Cardiac septum (tissue), 1 donor: ENCODE measurements at regions of chr9 and their contacts with region 1.

Region 1: GRCh38 chr9:17531642-17532254 is 47.1 kb upstream of the SH3GL2 start:
- DNase-seq: no peak

Region 2: DNA sequence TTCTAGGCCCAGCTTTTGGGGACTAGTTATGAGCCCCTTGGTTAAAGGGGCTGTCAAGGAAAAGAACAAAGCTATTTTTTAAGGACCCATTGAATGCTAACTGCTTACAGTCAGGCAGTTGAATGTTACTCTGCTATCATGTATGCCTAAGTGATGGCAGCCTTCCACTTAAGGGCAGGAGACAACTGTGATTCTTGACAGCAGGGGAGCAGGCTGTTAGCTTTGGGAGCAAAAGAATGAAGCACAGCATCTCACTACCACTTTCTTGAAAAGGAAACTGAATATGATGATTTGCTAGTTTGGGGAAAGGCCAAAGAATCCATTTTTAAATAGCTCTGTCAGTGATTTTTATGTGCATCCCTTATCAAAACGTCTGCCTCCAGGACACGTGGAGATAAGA is 268.7 kb after region 1 on chr9:
- intact Hi-C with region 1: loop called (anchors 2 kb)
- DNase-seq: no peak